ENCODE measurements at regions of chr6 and their contacts with region 1.

Region 1: GRCh38 chr6:30742316-30743098 is at the start of gene FLOT1:
- DNase-seq: peak; percentile 99
- H3K4me3 Mint-ChIP-seq: peak within 1 kb of the TSS; percentile 93
- H3K27ac Mint-ChIP-seq: peak within 1 kb of the TSS; percentile 98
- H3K4me1 Mint-ChIP-seq: peaks cover 60% of the 10 kb centered on the region
- H3K27me3 Mint-ChIP-seq: peaks cover 13% of the 10 kb centered on the region
- CTCF ChIP-seq: no peak
- total RNA-seq, gene FLOT1: 240 and 243 TPM in 2 replicates

Region 2: GRCh38 chr6:30311101-30311500 is 431.4 kb before region 1 on chr6:
- CTCF ChIA-PET with region 1: no interaction called
- intact Hi-C with region 1: no loop called
- DNase-seq: no peak
- H3K4me3 Mint-ChIP-seq: no peak overlapping the region
- H3K27ac Mint-ChIP-seq: no peak overlapping the region
- H3K4me1 Mint-ChIP-seq: peaks cover 13% of the 10 kb centered on the region
- H3K27me3 Mint-ChIP-seq: no peaks in the 10 kb centered on the region
- CTCF ChIP-seq: no peak

Region 3: DNA sequence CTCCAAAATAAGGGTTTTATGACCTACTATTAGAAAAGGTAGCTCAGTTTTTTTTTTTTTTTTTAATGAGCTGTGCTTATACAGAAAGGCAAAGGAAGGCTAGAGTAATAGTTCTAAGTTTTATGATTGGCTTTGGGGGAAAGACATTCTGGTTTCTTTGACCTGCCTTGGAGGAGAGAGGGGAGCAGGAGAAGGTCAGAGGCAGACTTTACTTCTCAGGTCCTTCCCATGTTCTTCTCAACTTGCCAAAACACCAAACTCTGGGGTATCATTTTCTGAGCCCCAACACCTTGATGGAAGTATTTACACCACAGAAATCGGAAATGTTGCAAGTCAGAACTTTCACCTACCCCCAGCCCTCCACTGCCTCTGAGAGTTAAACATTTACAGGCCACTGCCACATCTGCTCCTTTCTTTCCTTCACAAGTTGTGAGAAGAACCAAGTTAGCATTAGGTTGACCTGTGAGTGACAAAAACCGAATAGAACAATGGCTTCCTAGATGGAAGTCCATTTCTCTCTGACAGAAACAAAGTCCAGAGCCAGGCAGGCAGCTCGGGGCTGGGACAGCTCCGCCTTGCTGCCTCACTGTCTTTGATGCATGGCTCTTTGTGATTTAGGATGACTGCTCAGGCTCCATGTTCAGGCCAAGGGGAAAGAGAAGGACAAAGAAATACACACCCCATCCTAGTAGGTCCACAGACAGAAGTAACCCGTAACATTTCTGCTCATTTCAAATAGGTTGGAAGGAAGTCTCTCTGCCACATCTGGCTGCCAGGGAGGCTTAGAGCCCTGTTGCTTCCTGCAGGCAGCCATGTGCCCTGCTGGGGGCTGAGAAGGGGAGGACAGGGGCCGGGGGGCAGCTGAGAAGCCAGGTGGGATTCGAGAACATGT is 21.0 kb after region 1 on chr6:
- CTCF ChIA-PET with region 1: interaction called, 4 read pairs
- intact Hi-C with region 1: loop called (anchors 1 kb)
- DNase-seq: peak; percentile 77
- H3K4me3 Mint-ChIP-seq: peak overlapping the region; percentile 27
- H3K27ac Mint-ChIP-seq: peak overlapping the region; percentile 88
- H3K4me1 Mint-ChIP-seq: peaks cover 55% of the 10 kb centered on the region
- H3K27me3 Mint-ChIP-seq: no peaks in the 10 kb centered on the region
- CTCF ChIP-seq: no peak

Region 4: DNA sequence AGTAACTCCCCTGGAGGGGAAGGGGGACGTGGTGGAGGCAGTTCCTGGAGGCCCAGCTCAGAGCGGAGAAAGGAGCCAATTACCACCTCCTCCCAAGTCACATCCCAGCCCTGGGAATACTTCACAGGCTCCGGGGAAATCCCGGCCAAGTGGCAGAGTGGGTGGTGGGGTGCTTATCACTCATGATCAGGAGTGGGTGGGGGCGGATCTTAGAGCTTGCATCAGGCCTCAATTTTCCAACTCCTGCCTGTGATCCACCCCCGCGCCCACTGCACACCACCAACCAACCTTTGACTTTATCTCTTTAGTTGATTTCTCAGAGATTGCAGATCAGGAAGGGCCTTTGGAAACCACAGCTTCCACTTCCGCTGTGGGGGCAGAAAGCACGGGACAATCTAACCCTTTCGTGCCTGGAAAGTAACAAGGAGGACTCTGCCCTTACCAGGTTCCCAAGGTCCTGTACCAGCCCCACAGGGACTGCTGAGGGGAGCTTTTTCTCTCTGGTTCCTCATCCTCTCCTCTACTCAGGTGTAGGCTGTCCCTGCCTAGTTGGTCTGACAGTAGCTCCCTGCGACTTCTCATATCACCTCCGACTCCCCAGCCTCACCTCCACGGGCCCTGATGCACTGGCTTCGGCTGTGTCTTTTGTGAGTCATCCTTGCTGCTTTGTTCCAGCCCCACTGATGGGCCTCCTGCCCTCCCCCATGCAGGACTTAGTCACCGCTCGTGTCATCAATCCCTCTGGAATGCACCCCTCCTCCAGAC is 26.8 kb after region 1 on chr6:
- CTCF ChIA-PET with region 1: interaction called, 10 read pairs
- intact Hi-C with region 1: loop called (anchors 1 kb)
- DNase-seq: peak; percentile 93
- H3K4me3 Mint-ChIP-seq: peak overlapping the region; percentile 53
- H3K27ac Mint-ChIP-seq: peak overlapping the region; percentile 93
- H3K4me1 Mint-ChIP-seq: peaks cover 69% of the 10 kb centered on the region
- H3K27me3 Mint-ChIP-seq: no peaks in the 10 kb centered on the region
- CTCF ChIP-seq: no peak

Region 5: DNA sequence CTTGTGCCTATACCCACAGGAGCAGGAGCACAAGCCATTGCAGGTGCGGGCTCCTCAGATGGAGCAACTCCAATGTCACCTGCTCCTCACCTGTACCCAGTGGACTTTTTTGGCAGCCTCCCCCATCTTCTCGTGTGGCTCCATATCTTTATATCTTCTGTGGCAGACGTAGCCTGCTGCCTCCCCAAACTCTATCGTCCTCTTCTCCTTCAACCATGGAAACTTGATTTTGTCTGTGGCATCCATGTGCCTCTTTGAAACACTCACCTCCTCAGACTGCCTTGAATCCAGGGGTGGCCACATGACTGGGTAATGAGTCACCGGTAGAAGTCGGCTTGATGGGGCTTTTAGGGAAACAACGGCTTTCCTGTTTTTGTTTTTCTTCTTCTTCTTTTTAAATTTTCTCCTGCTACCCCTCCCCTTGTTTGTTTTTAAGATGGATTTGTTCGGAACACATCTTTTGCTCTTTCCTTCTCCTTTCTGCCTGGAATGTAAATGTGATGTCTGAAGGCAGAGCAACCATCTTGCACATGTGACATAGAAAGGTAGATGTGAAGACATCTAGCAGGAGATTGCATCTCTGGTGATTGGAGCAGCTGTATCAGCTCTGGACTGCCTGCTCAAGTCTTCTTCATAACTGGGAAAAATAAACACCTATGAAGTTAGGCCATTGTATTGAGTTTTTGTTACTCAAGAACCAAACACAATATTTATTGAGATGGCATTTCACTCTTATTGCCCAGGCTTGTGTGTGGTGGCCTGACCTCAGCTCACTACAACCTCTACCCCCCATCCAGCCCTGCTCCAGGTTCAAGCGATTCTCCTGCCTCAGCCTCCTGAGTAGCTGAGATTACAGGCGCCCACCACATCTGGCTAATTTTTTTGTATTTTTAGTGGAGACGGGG is 71.9 kb after region 1 on chr6:
- CTCF ChIA-PET with region 1: interaction called, 3 read pairs
- intact Hi-C with region 1: loop called (anchors 2 kb)
- DNase-seq: peak; percentile 77
- H3K4me3 Mint-ChIP-seq: peak overlapping the region; percentile 3
- H3K27ac Mint-ChIP-seq: peak overlapping the region; percentile 84
- H3K4me1 Mint-ChIP-seq: peaks cover 58% of the 10 kb centered on the region
- H3K27me3 Mint-ChIP-seq: no peaks in the 10 kb centered on the region
- CTCF ChIP-seq: no peak

Region 6: DNA sequence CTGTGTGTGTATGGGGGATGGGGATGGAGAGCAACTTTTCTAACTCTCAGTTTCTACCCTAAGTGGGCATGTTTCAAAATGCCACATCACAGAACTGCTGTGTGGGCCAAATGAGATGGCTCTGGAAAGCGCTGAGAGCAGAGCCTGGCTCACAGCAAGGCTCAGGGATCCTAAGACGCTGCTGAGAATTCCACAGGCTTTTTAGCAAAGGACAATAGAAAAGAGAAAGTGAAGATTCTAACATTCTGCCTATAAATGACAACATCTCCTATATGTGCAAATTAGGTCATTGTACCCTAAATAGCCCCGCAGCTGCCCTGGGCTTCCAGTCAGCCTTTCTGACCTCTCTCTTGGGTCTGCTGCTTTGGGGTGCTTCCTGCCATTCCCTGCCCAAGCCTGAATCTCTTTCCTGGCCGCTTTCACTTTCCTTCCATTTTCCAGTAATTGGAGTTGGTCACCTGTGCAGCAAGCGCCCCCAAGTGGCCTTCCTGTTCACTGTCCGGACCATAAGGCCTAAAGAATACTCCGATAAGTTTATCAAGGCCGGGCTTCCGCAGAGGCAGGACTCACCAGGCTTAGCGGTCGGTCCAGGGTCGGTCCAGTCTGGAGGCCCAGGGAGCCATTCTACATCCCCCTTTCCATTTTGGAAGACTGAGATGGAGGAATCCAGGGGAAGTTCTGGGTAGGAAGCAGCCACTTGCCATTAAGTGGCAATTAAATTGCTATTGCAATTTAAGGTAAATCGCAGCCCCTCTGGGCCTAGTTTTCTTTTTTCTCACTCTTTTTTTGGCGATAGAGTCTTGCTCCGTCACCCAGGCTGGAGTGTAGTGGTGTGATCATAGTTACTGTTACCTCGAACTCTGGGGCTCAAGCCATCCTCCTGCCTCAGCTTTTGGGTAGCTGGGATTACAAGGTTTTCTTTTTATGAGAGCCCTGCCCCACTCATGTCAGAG is 135.2 kb after region 1 on chr6:
- CTCF ChIA-PET with region 1: no interaction called
- intact Hi-C with region 1: loop called (anchors 2 kb)
- DNase-seq: peak; percentile 97
- H3K4me3 Mint-ChIP-seq: peak overlapping the region; percentile 47
- H3K27ac Mint-ChIP-seq: peak overlapping the region; percentile 61
- H3K4me1 Mint-ChIP-seq: peaks cover 59% of the 10 kb centered on the region
- H3K27me3 Mint-ChIP-seq: peaks cover 16% of the 10 kb centered on the region
- CTCF ChIP-seq: peak; percentile 98

Region 7: DNA sequence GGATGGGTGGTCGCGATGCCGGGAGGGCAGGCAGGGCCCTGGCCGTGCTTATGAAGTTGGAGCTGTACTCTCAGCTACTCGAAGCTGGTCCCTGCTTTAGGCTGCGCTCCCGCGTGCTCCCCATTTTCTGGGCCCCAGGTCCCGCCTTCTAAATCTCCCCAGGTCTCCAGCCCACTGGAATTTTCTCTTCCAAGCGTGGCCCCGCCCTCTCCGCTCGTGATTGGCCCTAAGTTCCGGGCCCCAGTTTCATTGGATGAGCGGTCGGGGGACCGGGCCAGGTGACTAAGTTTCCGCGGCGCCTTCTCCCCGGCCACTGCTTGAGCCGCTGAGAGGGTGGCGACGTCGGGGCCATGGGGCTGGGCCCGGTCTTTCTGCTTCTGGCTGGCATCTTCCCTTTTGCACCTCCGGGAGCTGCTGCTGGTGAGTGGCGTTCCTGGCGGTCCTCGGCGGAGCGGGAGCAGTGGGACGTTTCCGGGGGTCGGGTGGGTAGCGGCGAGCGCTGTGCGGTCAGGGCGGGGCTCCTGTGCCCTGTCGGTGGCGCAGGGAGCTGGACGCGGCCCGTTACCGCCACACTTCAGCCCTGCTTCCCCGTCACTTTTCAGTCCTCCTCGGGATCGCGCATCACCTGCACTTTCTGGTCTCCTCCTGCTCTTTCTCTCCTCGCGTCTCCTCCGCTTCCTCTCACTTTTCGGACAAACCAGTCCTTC is 660.9 kb after region 1 on chr6 and contains the start of gene MICA:
- CTCF ChIA-PET with region 1: no interaction called
- intact Hi-C with region 1: no loop called
- DNase-seq: peak; percentile 99
- H3K4me3 Mint-ChIP-seq: peak within 1 kb of the TSS; percentile 95
- H3K27ac Mint-ChIP-seq: peak within 1 kb of the TSS; percentile 64
- H3K4me1 Mint-ChIP-seq: peaks cover 67% of the 10 kb centered on the region
- H3K27me3 Mint-ChIP-seq: no peaks in the 10 kb centered on the region
- CTCF ChIP-seq: peak; percentile 40
- total RNA-seq, gene MICA: 70.2 and 77.1 TPM in 2 replicates

Measured in Calu3 (cell line).